HEK293 (cell line): ENCODE measurements at regions of chr1 and their contacts with region 1.

Region 1: DNA sequence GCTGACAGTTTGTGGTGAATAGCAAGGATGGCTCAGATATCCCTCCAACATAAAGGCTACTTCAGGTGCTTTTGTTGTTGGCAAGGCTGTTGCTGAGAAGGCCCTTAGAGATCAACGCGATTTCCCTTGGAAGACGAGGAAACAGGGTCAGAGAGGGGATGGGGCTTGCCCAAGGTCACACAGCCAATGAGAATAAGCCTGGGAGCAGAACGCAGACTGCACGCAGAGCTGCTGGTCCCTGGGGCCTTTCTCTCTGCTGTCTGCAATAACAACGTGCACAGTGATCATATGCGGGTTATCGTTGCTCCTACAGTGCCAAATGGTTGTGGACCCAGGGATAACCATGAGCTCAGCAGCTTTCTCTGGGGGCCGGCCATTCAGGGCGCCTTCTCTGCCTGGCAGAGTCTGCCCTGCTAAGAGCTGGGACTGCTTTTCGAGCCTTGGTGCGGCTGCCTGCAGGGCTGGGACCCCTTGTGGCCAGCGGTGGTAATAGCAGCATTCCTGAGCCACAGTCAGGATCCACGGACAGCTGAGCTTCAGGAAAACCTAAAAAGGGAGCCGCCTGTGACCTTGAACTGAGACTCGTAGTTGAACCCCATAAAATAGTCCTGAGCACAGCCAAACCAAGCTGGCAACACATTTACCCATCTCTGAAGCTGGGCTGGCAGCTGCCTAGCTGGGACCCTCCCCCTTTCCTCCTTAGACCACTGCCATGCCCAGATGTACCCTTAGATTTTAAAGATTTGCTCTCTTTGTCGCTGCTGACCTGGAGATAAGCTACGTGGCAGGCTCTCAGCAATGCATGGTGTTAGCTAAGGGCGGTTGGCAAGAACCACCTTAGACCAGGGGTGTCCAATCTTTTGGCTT is 39.8 kb downstream of the HTR6 start:
- H3K4me3 ChIP-seq: no peak overlapping the region
- H3K27ac ChIP-seq: no peak overlapping the region
- H3K4me1 ChIP-seq: no peaks in the 10 kb centered on the region
- CTCF ChIP-seq: peak; percentile 77

Region 2: GRCh38 chr1:19450811-19451515 is 253.5 kb before region 1 on chr1:
- CTCF ChIA-PET with region 1: no interaction called
- POLR2A ChIA-PET with region 1: no interaction called
- H3K4me3 ChIP-seq: no peak overlapping the region
- H3K27ac ChIP-seq: no peak overlapping the region
- H3K4me1 ChIP-seq: peaks cover 21% of the 10 kb centered on the region
- CTCF ChIP-seq: no peak

Region 3: GRCh38 chr1:19668893-19669292 is 35.6 kb before region 1 on chr1:
- CTCF ChIA-PET with region 1: interaction called, 140 read pairs
- POLR2A ChIA-PET with region 1: no interaction called
- H3K4me3 ChIP-seq: no peak overlapping the region
- H3K27ac ChIP-seq: no peak overlapping the region
- H3K4me1 ChIP-seq: no peaks in the 10 kb centered on the region
- CTCF ChIP-seq: no peak

Region 4: DNA sequence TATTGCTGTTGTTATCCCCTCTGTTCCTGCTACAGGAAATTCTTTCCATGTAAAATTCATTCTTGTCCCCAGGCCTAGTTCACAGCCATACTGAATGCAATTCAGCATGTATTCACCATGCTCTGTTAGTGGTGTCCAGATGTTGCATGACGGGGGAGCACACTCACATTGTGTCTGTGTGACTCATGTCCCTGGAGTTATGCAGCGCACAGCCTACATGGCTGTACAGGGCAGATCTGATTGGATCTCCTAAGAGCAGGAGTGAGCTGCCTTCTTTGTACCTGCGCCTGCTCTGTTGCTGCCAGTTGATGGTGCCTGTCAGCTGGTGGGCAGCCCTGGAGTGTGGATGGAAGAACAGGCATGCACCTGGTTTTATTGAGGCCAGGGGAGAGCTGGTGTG is 22.2 kb before region 1 on chr1:
- CTCF ChIA-PET with region 1: interaction called, 12 read pairs
- POLR2A ChIA-PET with region 1: no interaction called
- H3K4me3 ChIP-seq: no peak overlapping the region
- H3K27ac ChIP-seq: no peak overlapping the region
- H3K4me1 ChIP-seq: no peaks in the 10 kb centered on the region
- CTCF ChIP-seq: no peak

Region 5: GRCh38 chr1:19694298-19694697 is 10.2 kb before region 1 on chr1:
- CTCF ChIA-PET with region 1: interaction called, 15 read pairs
- POLR2A ChIA-PET with region 1: no interaction called
- H3K4me3 ChIP-seq: no peak overlapping the region
- H3K27ac ChIP-seq: no peak overlapping the region
- H3K4me1 ChIP-seq: no peaks in the 10 kb centered on the region
- CTCF ChIP-seq: no peak

Region 6: DNA sequence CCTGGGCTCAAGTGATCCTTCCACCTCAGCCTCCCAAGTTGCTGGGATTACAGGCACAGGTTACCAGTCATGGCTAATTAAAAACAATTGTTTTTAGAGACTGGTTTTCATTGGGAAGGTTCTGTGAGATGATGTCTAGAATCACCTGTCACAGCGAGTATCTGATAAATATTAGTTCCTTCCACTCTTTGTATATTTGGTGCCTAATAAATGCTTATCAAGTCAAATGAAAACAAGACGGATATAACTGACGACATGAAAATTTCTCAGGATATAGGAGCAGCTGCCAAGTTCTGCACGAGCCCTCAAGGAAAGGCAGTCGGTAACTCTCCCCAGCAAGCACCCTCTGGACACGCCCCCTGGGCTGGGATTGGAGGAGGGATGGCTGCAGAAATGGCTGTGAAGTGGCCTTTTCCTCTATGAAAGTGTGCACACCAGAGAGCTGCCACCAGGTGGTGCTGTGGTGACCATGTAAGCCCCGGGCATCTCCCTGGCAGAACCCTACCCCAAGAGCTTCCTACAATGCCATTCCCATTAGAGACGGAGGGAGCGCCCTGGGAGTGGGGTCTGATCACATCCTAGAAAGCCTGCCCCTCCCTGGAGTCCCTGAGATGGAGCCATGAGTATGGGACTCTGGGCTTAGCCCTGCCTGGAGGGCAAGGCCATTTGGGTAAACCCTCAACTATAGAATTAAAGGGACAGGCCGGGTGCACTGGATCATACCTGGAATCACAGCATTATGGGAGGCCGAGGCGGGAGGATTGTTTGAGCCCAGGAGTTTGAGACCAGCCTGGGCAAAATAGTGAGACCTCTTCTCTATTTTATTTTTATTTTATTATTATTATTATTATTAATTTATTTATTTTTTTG is 11.1 kb after region 1 on chr1:
- CTCF ChIA-PET with region 1: interaction called, 62 read pairs
- POLR2A ChIA-PET with region 1: interaction called, 5 read pairs
- H3K4me3 ChIP-seq: no peak overlapping the region
- H3K27ac ChIP-seq: no peak overlapping the region
- H3K4me1 ChIP-seq: no peaks in the 10 kb centered on the region
- CTCF ChIP-seq: peak; percentile 89